Activated CD8-positive, alpha-beta memory T cell treated with anti-CD3 and anti-CD28 coated beads, Interleukin-2, amount 10 ng/mL, durations not matched to agents 7 days and 5 days (primary cell): ENCODE measurements at regions of chr12 and their contacts with region 1.

Region 1: DNA sequence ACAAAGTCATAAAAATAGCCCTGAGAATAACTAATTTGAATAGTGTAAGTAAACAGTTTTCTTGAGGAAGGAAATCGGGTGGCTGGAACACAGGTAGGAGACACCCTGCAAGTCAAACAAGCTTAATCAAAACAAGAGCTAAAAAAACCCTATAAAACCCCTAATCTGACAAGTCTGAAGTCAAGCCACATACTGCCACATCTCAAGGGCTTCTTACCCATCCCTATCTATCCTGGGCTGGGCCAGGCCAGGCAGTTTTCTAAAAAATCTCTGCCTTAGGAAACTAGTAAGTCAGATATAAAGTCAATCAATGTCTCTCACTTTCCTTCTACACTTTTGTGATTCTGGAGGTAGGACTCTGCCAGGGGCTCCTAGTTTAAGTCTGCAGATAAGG is 15.3 kb downstream of the UBE2N start:
- DNase-seq: no peak
- ATAC-seq: peak; percentile 39
- H3K4me3 Mint-ChIP-seq: no peak overlapping the region
- H3K27ac Mint-ChIP-seq: no peak overlapping the region
- H3K4me1 Mint-ChIP-seq: peaks cover 70% of the 10 kb centered on the region
- H3K27me3 Mint-ChIP-seq: no peaks in the 10 kb centered on the region

Region 2: DNA sequence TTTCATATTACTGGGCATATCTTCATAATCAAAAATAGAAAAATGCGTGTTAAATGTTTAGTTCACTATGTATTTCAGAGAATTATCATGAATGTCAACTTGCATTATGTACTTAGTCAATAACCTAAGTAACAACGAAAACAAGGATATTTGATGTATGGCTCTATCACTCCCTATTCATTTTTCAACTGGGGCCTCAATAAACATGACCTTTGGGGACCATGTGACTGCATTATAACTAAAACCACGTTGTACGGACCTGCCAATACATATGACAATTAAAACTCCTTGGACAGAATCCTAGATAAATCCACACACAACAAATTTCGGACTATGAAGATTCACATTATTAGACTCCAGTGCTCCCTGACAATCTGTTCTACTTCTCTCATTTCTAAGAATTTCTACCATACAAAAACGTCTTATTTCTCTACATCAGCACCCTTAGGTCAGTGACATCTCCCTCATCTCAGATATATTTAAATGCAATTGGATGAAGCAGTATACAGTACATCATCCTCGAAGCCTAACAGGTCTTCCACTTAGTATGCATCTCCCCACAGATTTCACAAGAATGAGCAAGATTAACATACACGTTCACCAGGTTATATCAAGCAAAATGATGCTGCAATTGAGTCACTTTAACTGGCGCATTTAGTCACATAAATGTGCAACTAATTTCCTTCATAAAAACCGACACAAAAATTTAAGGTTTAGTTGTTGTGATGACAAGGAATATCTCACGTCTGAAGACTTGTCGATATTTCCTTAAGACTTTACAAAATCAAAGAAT is 13.8 kb after region 1 on chr12:
- CTCF ChIA-PET with region 1: interaction called, 13 read pairs
- DNase-seq: no peak
- ATAC-seq: no peak
- H3K4me3 Mint-ChIP-seq: peak overlapping the region; percentile 97
- H3K27ac Mint-ChIP-seq: peak overlapping the region; percentile 97
- H3K4me1 Mint-ChIP-seq: peaks cover 59% of the 10 kb centered on the region
- H3K27me3 Mint-ChIP-seq: no peaks in the 10 kb centered on the region

Region 3: GRCh38 chr12:93785262-93786010 is 359.0 kb after region 1 on chr12:
- CTCF ChIA-PET with region 1: no interaction called
- DNase-seq: peak; percentile 75
- ATAC-seq: peak; percentile 98
- H3K4me3 Mint-ChIP-seq: no peak overlapping the region
- H3K27ac Mint-ChIP-seq: peak overlapping the region; percentile 59
- H3K4me1 Mint-ChIP-seq: peaks cover 32% of the 10 kb centered on the region
- H3K27me3 Mint-ChIP-seq: no peaks in the 10 kb centered on the region

Region 4: GRCh38 chr12:94001691-94002090 is 575.3 kb after region 1 on chr12:
- CTCF ChIA-PET with region 1: no interaction called
- DNase-seq: no peak
- ATAC-seq: no peak
- H3K4me3 Mint-ChIP-seq: no peak overlapping the region
- H3K27ac Mint-ChIP-seq: no peak overlapping the region
- H3K4me1 Mint-ChIP-seq: no peaks in the 10 kb centered on the region
- H3K27me3 Mint-ChIP-seq: peaks cover 20% of the 10 kb centered on the region